HAP-1 (cell line): ENCODE measurements at regions of chr11 and their contacts with region 1.

Region 1: GRCh38 chr11:66694732-66695207 is 17.1 kb upstream of the RBM4B start:
- DNase-seq: peak; percentile 92 to 95
- H3K4me3 ChIP-seq: no peak overlapping the region
- H3K4me1 ChIP-seq: no peaks in the 10 kb centered on the region
- H3K27me3 ChIP-seq: no peaks in the 10 kb centered on the region

Region 2: GRCh38 chr11:66842896-66843775 is 148.4 kb after region 1 on chr11 and contains the start of gene RCE1:
- in situ Hi-C with region 1: loop called (anchors 5 kb)
- DNase-seq: peak; percentile 73 to 93
- H3K4me3 ChIP-seq: peak within 1 kb of the TSS; percentile 97
- H3K4me1 ChIP-seq: peaks cover 15% of the 10 kb centered on the region
- H3K27me3 ChIP-seq: no peaks in the 10 kb centered on the region

Region 3: DNA sequence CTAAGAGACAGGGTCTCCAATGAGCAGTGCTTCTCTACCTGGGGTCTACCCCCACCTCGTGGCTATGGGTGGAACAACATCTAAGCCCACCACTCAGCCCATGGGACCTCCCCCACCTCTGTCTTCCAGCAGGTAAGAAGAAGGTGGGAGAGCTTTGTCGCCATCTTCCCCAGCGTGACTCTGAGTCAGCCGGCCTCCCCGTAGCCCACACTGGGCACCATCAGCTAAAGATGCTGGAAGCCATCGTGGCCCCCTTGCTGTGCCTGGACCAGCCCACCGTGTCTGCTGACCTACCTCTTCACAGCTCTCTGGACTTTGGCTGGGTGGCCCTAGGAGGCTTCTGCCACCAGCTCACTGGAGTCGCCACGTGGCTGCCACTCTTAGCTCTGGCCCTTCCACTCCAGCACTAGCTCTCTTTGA is 281.3 kb after region 1 on chr11:
- in situ Hi-C with region 1: loop called (anchors 10 kb)
- DNase-seq: peak in 1 of 2 experiments; percentile 73
- H3K4me3 ChIP-seq: no peak overlapping the region
- H3K4me1 ChIP-seq: no peaks in the 10 kb centered on the region; the same call in 1 of the 2 replicates
- H3K27me3 ChIP-seq: no peaks in the 10 kb centered on the region